ENCODE measurements at regions of chr1 and their contacts with region 1.

Region 1: DNA sequence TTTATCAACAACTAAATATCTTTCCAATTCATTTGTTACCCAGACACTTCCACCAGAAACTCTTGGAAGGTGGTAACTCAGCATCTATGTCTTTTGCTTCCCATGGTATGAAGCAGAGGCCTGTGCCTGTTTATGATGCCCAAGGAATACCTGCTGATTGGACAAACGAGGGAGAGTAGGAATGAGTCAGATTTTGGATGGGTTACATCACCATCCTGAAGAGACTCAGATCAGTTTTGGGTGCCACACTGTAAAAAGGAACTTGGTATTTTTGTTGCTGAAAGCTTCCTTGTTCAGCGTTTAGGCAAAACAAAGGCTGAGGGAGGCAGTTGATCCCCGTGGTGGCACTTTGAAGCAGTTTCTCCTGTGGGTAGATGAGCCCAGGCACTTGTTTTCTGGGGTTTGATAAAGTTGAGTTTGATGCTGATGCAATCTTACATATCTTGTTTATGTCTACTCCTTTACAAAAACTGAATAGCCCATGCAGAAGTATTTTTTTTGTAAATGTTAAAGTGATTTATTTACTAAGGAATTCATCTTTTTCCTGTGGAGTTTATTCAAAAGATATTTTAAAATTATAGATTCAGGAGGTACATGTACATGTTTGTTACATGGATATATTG is 26.7 kb upstream of the CYP4X1 start:
- DNase-seq: no peak
- ATAC-seq: no peak
- H3K4me3 ChIP-seq: no peak overlapping the region
- H3K27ac ChIP-seq: no peak overlapping the region
- H3K4me1 ChIP-seq: no peaks in the 10 kb centered on the region
- H3K27me3 ChIP-seq: peaks cover 9% of the 10 kb centered on the region
- CTCF ChIP-seq: no peak
- POLR2A ChIP-seq: no peak
- RAD21 ChIP-seq: no peak

Region 2: DNA sequence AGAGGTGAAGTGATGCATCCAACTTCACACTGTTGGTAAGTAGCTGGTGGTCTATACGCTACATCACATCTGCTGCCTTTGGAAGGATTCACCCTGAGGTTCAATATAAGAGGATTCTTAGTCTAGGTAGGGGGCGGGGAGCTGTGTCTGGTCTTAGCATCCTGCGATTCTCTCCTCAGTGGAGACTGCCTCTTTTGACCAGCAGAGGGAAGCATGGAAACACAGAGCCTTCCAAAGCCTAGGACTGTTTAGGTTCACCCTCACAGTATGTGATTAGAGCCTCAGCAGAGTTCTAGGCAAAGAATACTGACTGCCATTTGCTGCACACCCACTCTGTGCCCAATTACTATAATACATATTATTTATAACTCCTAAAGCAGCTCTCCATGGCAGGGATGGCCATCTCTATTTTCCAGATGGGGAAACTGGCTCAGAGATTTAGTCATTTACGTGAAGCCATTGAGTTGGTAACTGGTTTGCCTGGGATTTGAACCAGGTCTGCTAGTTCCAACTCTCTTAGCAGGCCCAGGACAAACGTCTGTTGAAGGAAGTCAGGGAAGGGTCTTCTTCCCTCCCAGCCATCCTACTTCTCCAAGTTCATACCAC is 249.0 kb before region 1 on chr1:
- CTCF ChIA-PET with region 1: no interaction called
- POLR2A ChIA-PET with region 1: no interaction called
- RAD21 ChIA-PET with region 1: no interaction called
- intact Hi-C with region 1: loop called (anchors 5 kb)
- DNase-seq: peak; percentile 34
- ATAC-seq: peak; percentile 100
- H3K4me3 ChIP-seq: no peak overlapping the region
- H3K27ac ChIP-seq: no peak overlapping the region
- H3K4me1 ChIP-seq: no peaks in the 10 kb centered on the region
- H3K27me3 ChIP-seq: peaks cover 66% of the 10 kb centered on the region
- CTCF ChIP-seq: peak; percentile 44 to 77 (median 62); a peak in 5 of 6 replicates
- POLR2A ChIP-seq: no peak
- RAD21 ChIP-seq: peak; percentile 72

Measured in HCT116 (cell line).